PC-3 (cell line): ENCODE measurements at regions of chr18 and their contacts with region 1.

Region 1: GRCh38 chr18:22108674-22109073 is 60.7 kb upstream of the GATA6 start:
- DNase-seq: no peak
- ATAC-seq: peak; percentile 33
- H3K4me3 ChIP-seq: no peak overlapping the region
- H3K27ac ChIP-seq: no peak overlapping the region
- H3K4me1 ChIP-seq: peaks cover 13% of the 10 kb centered on the region
- H3K27me3 ChIP-seq: no peaks in the 10 kb centered on the region
- CTCF ChIP-seq: peak; percentile 49

Region 2: GRCh38 chr18:21997207-21998143 is 111.2 kb before region 1 on chr18:
- CTCF ChIA-PET with region 1: no interaction called
- POLR2A ChIA-PET with region 1: no interaction called
- intact Hi-C with region 1: loop called (anchors 1 kb)
- DNase-seq: peak; percentile 50
- ATAC-seq: peak; percentile 67
- H3K4me3 ChIP-seq: no peak overlapping the region
- H3K27ac ChIP-seq: no peak overlapping the region
- H3K4me1 ChIP-seq: no peaks in the 10 kb centered on the region
- H3K27me3 ChIP-seq: no peaks in the 10 kb centered on the region
- CTCF ChIP-seq: peak; percentile 92

Region 3: GRCh38 chr18:22210311-22210754 is 101.7 kb after region 1 on chr18:
- CTCF ChIA-PET with region 1: no interaction called
- POLR2A ChIA-PET with region 1: no interaction called
- intact Hi-C with region 1: no loop called
- DNase-seq: no peak
- ATAC-seq: no peak
- H3K4me3 ChIP-seq: no peak overlapping the region
- H3K27ac ChIP-seq: no peak overlapping the region
- H3K4me1 ChIP-seq: peaks cover 10% of the 10 kb centered on the region
- H3K27me3 ChIP-seq: no peaks in the 10 kb centered on the region
- CTCF ChIP-seq: no peak

Region 4: DNA sequence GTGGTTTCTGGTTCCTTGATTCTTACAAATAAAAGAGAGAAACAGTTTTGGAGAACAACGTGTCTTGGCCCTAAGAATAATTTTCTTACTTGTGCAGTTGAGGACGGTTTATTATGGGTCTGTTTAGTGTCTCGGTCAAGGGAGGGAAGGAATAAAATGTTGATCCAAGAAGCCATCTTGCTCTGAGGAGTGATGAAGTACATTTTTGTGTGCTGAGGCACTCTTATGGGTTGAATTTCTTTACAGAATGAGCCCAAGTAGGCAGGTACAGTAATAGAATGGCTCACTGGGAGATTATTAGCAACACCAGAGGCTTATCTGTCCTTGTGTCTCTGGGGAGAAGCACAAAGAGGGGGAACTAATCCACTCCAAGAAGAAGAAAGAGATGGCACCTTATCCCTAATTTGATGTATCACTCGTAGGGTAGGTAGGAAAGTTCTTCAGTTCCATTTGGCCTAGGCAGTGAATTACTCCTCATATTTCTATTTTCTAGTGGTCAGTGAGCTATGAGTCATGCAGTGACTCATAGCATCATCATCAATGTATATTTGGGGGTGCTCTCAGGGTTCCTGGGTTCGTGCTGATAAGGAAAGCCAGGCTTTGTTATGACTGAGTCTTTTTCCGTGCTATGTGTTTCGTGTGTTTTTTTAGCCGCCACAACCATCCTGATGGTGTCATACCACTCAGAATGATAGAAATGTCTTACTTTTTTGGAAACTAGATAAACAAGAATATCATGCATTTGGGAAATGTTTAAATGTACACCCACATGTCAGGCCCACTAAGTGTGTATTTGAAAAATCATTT is 559.1 kb after region 1 on chr18:
- CTCF ChIA-PET with region 1: no interaction called
- POLR2A ChIA-PET with region 1: no interaction called
- intact Hi-C with region 1: no loop called
- DNase-seq: peak; percentile 91
- ATAC-seq: peak; percentile 95
- H3K4me3 ChIP-seq: peak overlapping the region; percentile 8; the same call in 1 of the 2 replicates
- H3K27ac ChIP-seq: peak overlapping the region; percentile 66
- H3K4me1 ChIP-seq: peaks cover 21% of the 10 kb centered on the region
- H3K27me3 ChIP-seq: no peaks in the 10 kb centered on the region
- CTCF ChIP-seq: no peak

Region 5: GRCh38 chr18:22694954-22695353 is 586.3 kb after region 1 on chr18:
- CTCF ChIA-PET with region 1: no interaction called
- POLR2A ChIA-PET with region 1: no interaction called
- intact Hi-C with region 1: loop called (anchors 5 kb)
- DNase-seq: peak; percentile 93
- ATAC-seq: peak; percentile 99
- H3K4me3 ChIP-seq: 0 out of 2 replicates have a peak overlapping the region, but pooled peaks have one; percentile 30
- H3K27ac ChIP-seq: peak overlapping the region; percentile 56
- H3K4me1 ChIP-seq: peaks cover 24% of the 10 kb centered on the region
- H3K27me3 ChIP-seq: no peaks in the 10 kb centered on the region
- CTCF ChIP-seq: no peak